Activated CD4-positive, alpha-beta T cell treated with anti-CD3 and anti-CD28 coated beads for 36 hours (primary cell): ENCODE measurements at regions of chr2 and their contacts with region 1.

Region 1: GRCh38 chr2:219160186-219161017 is at the start of gene NHEJ1:
- DNase-seq: peak; percentile 97
- ATAC-seq: peak; percentile 89
- H3K4me3 Mint-ChIP-seq: peak within 1 kb of the TSS; percentile 81
- H3K27ac Mint-ChIP-seq: peak within 1 kb of the TSS; percentile 88
- H3K4me1 Mint-ChIP-seq: peaks cover 13% of the 10 kb centered on the region
- H3K27me3 Mint-ChIP-seq: no peaks in the 10 kb centered on the region
- total RNA-seq, gene NHEJ1: 20.7 to 23.8 TPM

Region 2: DNA sequence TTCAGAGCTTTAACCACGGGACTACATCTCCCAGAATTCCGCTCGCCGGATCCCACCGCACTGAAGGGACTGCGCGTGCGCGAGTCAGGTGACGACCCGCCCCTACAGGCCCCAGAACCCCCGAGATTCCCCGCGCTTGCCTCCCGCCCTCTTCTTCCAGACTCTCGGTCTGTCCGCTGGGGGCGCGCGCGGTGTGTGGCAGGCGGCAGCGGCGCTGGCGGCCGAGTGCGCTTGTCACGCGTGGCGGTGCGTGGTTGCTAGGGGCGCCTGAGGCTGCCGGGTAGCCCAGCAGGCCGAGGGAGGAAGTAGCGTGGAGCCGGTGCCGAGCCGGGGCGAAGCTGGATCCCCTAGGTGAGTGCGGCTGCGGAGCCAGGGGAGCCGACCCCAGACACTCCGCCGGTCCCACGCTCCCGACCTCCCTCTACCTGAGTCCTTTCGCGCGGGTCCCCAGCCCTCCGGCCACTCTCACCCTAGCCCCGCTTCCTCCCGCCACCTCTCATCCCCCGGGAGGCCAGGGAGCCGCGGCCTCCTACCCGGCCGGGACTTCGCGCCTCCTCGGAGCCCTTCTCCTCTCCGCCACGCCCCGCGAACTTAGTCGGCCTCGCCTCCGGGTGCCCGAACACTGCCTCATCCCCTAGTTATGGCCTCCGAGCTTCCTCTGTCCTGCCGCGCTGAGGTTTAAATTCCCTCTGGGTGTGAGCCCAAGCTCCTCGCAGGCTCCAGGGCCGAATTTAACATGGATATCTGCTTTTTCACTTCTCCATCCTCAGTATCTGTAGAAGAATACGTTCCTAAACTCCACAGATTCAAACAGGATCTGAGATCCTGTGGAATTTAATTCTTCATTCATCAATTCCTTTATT is 449.5 kb before region 1 on chr2 and contains the start of gene TTLL4:
- CTCF ChIA-PET with region 1: no interaction called
- POLR2A ChIA-PET with region 1: no interaction called
- intact Hi-C with region 1: loop called in 1 of 2 experiments (anchors 1 kb)
- DNase-seq: peak; percentile 99
- ATAC-seq: peak; percentile 98
- H3K4me3 Mint-ChIP-seq: peak within 1 kb of the TSS; percentile 96
- H3K27ac Mint-ChIP-seq: peak within 1 kb of the TSS; percentile 80
- H3K4me1 Mint-ChIP-seq: peaks cover 20% of the 10 kb centered on the region
- H3K27me3 Mint-ChIP-seq: no peaks in the 10 kb centered on the region
- total RNA-seq, gene TTLL4: 33.7 to 46.6 TPM

Region 3: DNA sequence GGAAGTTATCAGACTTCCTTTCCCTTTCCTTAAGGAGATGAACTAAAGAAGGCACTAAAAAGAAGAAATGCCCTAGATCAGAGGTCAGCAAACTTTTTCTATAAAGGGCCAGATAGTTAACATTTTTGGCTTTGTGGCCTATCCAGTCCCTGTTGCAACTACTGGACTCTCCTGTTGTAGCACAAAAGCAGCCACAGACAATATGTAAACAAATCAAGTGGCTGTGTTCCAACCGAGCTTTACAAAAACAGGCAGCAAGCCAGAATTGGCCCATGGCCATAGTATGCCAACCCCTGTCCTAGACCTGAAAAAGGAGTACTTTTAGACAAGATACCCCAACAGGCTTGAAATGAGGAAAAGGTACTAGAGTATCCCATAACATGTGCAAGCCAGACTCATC is 10.7 kb before region 1 on chr2:
- CTCF ChIA-PET with region 1: interaction called, 19 read pairs
- POLR2A ChIA-PET with region 1: no interaction called
- intact Hi-C with region 1: no loop called
- DNase-seq: no peak
- ATAC-seq: no peak
- H3K4me3 Mint-ChIP-seq: no peak overlapping the region
- H3K27ac Mint-ChIP-seq: no peak overlapping the region
- H3K4me1 Mint-ChIP-seq: peaks cover 1% of the 10 kb centered on the region
- H3K27me3 Mint-ChIP-seq: no peaks in the 10 kb centered on the region

Region 4: DNA sequence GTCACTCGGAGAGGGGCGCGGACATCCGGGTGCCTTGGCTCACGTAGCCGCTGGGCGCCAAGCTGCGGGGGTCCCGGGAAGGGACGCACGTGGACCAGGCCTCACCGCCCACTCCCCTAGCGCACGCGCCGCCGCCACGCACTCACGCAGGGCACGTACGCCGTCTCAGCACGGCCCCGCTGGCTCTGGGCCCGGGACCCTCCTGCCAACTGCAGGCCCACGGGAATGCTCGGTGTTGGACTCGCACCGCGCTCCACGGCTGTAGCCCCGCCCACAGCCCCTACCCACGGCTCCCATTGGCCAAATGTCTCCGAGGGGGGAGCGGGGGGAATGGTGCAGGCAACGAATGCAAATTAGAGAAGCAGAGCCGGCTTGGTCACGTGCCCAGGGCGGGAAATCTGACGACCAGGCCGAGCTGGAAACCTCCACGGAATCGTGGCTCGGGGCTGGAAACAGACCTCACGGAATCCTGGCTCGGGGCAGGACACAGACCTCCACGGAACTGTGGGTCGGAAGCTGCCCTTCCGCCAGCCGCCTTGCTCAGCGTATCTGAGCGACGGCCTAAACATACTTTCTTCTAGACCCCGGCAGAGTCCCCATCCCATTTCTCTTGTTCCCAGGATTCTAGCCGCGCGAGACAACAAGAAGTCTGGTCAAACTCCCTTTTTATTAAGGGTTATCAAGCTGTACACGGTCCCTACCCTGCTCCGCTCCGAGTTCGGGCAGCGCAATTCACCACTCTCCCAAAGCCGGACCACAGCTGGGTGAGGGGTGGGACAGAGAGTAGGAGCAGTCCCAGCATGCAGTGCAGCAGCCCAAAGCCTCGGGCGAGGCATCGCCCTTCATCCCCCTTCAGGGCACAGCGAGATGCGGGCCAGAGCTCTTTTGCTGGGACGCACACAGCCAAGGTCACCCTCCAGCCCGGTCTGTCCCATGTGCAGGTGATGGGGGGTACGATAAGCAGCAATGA is 58.6 kb after region 1 on chr2 and contains the start of gene ABCB6:
- CTCF ChIA-PET with region 1: interaction called, 9 read pairs
- POLR2A ChIA-PET with region 1: no interaction called
- intact Hi-C with region 1: loop called (anchors 1 to 2 kb)
- DNase-seq: peak; percentile 94
- ATAC-seq: peak; percentile 89
- H3K4me3 Mint-ChIP-seq: peak within 1 kb of the TSS; percentile 83
- H3K27ac Mint-ChIP-seq: peak within 1 kb of the TSS; percentile 74
- H3K4me1 Mint-ChIP-seq: peaks cover 24% of the 10 kb centered on the region
- H3K27me3 Mint-ChIP-seq: no peaks in the 10 kb centered on the region
- total RNA-seq, gene ABCB6: 18.2 to 21.9 TPM

Region 5: DNA sequence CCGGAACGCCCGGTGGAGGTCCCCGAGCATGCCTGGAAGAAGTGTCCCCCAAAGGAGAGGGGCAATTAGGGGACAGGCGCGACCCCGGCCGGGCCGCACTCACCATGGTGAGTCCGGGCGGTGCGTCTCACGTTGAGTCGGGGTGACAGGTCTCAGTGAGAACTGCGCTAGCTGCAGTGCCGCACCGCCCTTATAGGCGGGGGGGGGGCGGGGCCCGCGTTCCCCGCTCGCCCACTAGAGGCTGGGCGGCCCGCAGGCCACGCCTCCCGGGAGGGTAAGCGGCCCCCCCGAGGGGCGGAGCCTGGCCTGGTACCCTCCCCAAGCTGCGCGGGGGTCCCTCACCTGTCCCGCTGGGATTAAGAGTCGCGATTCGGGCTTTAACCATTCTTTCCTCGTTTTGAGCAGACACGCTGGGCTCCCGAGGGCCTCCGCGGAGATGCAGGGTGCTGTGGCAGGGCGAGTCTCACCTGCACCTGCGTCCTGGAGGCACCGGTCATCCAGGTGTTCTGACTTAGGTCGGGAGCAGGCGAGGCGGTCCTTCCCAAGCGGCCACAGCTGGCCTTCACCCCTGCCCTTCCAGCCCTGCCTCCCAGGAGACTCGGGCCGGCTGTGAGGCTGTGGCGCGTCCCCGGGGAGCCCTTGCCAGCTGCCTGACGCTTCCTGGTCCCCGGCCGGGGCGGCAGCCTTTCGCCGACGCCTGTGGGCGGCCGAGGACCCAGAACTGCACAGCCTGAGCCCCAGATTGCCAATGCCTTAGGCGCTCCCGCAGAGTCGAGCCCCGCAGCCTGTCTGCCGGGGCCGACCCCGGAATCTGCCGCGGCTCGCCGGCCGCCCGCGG is 93.6 kb after region 1 on chr2 and contains the start of gene TUBA4A:
- CTCF ChIA-PET with region 1: interaction called, 19 read pairs
- POLR2A ChIA-PET with region 1: no interaction called
- intact Hi-C with region 1: loop called (anchors 1 kb)
- DNase-seq: peak; percentile 94
- ATAC-seq: peak; percentile 63
- H3K4me3 Mint-ChIP-seq: peak within 1 kb of the TSS; percentile 89
- H3K27ac Mint-ChIP-seq: peak within 1 kb of the TSS; percentile 93
- H3K4me1 Mint-ChIP-seq: peaks cover 54% of the 10 kb centered on the region
- H3K27me3 Mint-ChIP-seq: no peaks in the 10 kb centered on the region
- total RNA-seq, gene TUBA4A: 210 to 369 TPM

Region 6: GRCh38 chr2:219352448-219353023 is 192.1 kb after region 1 on chr2:
- CTCF ChIA-PET with region 1: interaction called, 3 read pairs
- POLR2A ChIA-PET with region 1: no interaction called
- intact Hi-C with region 1: loop called (anchors 1 to 5 kb)
- DNase-seq: peak; percentile 86
- ATAC-seq: peak; percentile 96
- H3K4me3 Mint-ChIP-seq: no peak overlapping the region
- H3K27ac Mint-ChIP-seq: no peak overlapping the region
- H3K4me1 Mint-ChIP-seq: no peaks in the 10 kb centered on the region
- H3K27me3 Mint-ChIP-seq: peaks cover 30% of the 10 kb centered on the region